ENCODE measurements at regions of chr6 and their contacts with region 1.

Region 1: GRCh38 chr6:41584668-41585205 is 38.6 kb downstream of the FOXP4 start:
- DNase-seq: peak; percentile 63 to 86 (median 81)
- ATAC-seq: peak; percentile 64
- H3K4me3 ChIP-seq: no peak overlapping the region
- H3K27ac ChIP-seq: peak overlapping the region in 3 of 4 donors; percentile 38 to 47 (median 45)
- H3K4me1 ChIP-seq: peaks cover 49% of the 10 kb centered on the region
- H3K27me3 ChIP-seq: no peaks in the 10 kb centered on the region
- CTCF ChIP-seq: no peak
- POLR2A ChIP-seq: no peak

Region 2: DNA sequence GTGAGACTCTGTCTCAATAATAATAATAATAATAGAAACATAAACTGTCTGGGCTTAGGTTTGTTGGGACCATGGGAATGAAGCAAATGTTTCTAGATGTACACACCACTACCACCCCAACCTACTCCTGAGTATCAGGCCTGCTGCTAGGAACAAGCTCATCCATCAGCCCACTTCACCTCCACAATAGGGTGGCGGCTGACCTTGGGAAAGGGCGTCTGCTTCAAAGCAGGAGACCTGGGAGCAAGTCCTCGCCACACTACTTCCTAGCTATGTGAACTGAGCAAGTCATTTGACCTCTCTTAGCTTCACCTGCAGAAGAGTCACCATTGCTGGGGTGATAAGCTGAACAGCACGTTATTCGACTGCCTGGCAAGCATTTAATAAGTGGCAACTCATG is 41.6 kb before region 1 on chr6:
- intact Hi-C with region 1: loop called (anchors 5 kb)
- DNase-seq: no peak
- ATAC-seq: no peak
- H3K4me3 ChIP-seq: no peak overlapping the region
- H3K27ac ChIP-seq: no peak overlapping the region
- H3K4me1 ChIP-seq: peaks cover 15% of the 10 kb centered on the region
- H3K27me3 ChIP-seq: no peaks in the 10 kb centered on the region
- CTCF ChIP-seq: no peak
- POLR2A ChIP-seq: no peak

Measured in body of pancreas (tissue), 4 donors.